CD14-positive monocyte (primary cell): ENCODE measurements at regions of chr11 and their contacts with region 1.

Region 1: GRCh38 chr11:127074151-127074761 is 73.7 kb upstream of the KIRREL3 start:
- DNase-seq: no peak
- H3K4me3 ChIP-seq: no peak overlapping the region
- H3K4me3 Mint-ChIP-seq: no peak overlapping the region
- H3K27ac ChIP-seq: no peak overlapping the region
- H3K27ac Mint-ChIP-seq: no peak overlapping the region
- H3K4me1 ChIP-seq: no peaks in the 10 kb centered on the region
- H3K4me1 Mint-ChIP-seq: peaks cover 2% of the 10 kb centered on the region
- H3K27me3 ChIP-seq: no peaks in the 10 kb centered on the region
- H3K27me3 Mint-ChIP-seq: peaks cover 0 to 3% (median 1%) of the 10 kb centered on the region in 3 donors
- CTCF ChIP-seq: no peak

Region 2: GRCh38 chr11:127023991-127024390 is 50.3 kb before region 1 on chr11:
- intact Hi-C with region 1: loop called in 1 of 2 experiments (anchors 5 kb)
- DNase-seq: no peak
- H3K4me3 ChIP-seq: no peak overlapping the region
- H3K4me3 Mint-ChIP-seq: no peak overlapping the region
- H3K27ac ChIP-seq: no peak overlapping the region
- H3K27ac Mint-ChIP-seq: no peak overlapping the region
- H3K4me1 ChIP-seq: no peaks in the 10 kb centered on the region
- H3K4me1 Mint-ChIP-seq: no peaks in the 10 kb centered on the region
- H3K27me3 ChIP-seq: no peaks in the 10 kb centered on the region
- H3K27me3 Mint-ChIP-seq: peaks cover 0 to 2% (median 0%) of the 10 kb centered on the region in 3 donors
- CTCF ChIP-seq: no peak